Psoas muscle (tissue), 8 donors: ENCODE measurements at regions of chr5 and their contacts with region 1.

Region 1: DNA sequence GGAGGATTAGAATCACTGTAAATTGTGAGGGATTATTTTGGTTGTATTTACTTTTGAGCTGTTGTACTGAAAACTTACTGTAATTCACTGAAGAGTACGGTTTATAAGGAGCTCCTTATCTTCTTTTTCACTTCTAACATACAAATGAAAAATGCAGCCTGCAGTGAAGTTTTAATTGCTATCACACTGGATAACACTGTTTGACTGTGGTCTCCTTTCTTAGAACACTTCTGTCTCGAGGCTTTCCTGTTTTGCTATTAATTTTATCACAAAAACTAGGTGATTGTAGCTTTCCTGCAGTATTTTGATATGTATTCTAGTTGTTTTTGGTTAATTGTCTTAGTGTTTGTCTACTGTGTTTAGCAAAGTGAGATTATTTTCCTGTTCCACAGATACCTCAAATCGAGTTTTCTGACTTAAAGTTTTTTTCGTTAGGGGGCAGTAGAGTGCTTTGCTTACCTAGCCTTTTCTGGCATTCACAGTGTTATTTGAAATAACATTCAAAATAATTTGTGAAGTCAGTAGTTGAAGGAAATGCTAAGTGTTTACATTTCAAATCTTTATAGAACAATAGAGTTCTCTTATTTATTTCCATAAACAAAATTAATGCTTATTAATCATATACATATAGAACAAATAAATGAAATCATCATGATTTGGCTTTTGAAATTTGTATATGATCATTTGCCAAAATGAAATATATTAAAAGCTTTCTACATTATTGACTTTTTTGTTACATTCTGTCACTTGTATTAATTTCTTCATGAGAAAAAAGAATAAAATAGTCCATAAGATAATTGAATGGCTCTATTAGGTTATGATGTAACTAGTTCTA is 52.9 kb downstream of the COMMD10 start:
- DNase-seq: no peak
- ATAC-seq: peak in 2 of 4 donors; percentile 37 to 72
- H3K4me3 ChIP-seq: no peak overlapping the region
- H3K27ac ChIP-seq: no peak overlapping the region
- H3K4me1 ChIP-seq: peaks cover 7% of the 10 kb centered on the region
- H3K27me3 ChIP-seq: no peaks in the 10 kb centered on the region
- CTCF ChIP-seq: peak; percentile 84

Region 2: GRCh38 chr5:116947691-116948528 is 810.1 kb after region 1 on chr5:
- intact Hi-C with region 1: loop called in 1 of 2 experiments (anchors 10 kb)
- DNase-seq: peak; percentile 37 to 54
- ATAC-seq: peak; percentile 54 to 71 (median 61)
- H3K4me3 ChIP-seq: no peak overlapping the region
- H3K27ac ChIP-seq: no peak overlapping the region
- H3K4me1 ChIP-seq: no peaks in the 10 kb centered on the region
- H3K27me3 ChIP-seq: peaks cover 0 to 2% (median 0%) of the 10 kb centered on the region in 3 donors
- CTCF ChIP-seq: peak; percentile 47